Right lobe of liver (tissue), 6 donors: ENCODE measurements at regions of chr1 and their contacts with region 1.

Region 1: DNA sequence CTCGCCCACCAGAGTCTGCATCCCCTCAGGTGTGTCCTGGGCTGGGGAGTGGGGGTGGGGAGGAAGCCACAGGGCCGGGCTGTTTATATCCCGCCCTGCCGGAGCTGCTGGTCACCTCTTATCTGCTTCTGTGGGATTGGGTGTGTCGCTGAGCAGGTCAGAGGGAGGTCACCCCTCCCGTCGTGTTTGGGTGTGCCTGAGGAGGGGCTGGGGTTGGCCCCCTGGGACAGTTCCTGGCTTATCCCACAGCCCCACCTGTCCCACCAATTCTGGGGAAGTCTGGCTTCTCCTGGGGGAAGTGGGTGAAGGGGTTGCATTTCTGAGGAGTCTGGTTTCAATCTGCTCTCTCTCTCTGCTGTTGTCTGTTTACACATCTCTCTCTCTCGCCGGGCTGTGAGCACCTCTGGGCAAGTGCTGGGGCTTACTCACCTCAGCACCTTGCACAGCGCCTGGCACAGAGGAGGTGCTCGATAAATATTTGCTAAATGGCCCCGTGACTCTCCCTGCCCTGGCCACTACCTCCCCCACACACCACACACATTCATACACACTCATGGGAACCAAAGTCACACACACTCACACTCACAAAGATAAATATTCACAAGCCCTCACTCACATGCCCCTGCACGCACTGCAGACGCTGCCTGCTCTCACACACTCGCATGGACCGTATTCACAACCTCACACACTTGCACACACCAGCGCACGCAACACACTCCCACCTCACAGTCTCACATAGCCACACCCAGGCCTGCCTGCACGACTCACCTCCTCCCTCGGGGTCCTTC is 8.3 kb downstream of the ELF3 start:
- DNase-seq: peak; percentile 86 to 94 (median 93)
- ATAC-seq: peak; percentile 55 to 89 (median 81)
- H3K4me3 ChIP-seq: peak overlapping the region in 2 of 3 donors; percentile 34 to 35
- H3K27ac ChIP-seq: peak overlapping the region; percentile 73 to 94 (median 89)
- H3K4me1 ChIP-seq: peaks cover 0 to 58% (median 6%) of the 10 kb centered on the region in 4 donors
- H3K27me3 ChIP-seq: no peaks in the 10 kb centered on the region
- CTCF ChIP-seq: no peak
- POLR2A ChIP-seq: peak; percentile 35

Region 2: DNA sequence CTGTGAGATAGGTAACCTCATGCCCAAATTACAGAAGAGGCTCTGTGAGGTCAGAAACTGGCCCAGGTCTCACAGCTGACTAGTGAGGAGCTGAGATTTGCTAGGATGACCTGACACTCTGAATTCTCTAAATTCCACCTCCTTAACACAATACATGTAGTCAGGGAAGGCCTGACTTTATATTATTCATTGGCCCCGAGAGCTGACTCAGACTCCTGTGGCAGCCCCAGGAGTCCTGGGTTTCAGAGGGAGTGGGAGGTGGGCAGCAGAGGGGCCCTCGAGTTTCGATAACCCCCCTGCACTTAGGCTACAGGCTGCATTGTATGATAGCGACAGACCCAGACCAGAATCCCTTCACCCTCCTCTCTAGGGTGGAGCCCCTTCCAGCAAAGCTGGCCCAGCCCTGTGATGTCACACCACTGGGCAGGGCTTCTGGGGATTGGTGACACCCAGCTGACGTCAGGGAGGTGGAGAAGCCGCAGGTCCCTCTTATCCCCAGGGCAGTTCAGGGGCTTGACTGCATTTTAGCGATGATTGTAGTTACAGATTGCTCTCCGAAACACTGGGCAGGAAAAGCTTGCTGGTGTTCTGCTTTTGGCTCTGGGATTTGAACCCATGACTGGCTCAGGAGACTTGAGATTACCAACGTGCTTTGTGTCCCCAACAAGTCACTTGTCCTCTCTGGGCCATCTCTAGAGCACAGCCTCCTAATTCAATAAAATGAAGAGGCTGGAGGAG is 87.0 kb after region 1 on chr1:
- intact Hi-C with region 1: loop called in 1 of 2 experiments (anchors 5 kb)
- DNase-seq: no peak
- ATAC-seq: no peak
- H3K4me3 ChIP-seq: no peak overlapping the region
- H3K27ac ChIP-seq: no peak overlapping the region
- H3K4me1 ChIP-seq: peaks cover 0 to 29% (median 12%) of the 10 kb centered on the region in 4 donors
- H3K27me3 ChIP-seq: no peaks in the 10 kb centered on the region
- CTCF ChIP-seq: no peak
- POLR2A ChIP-seq: no peak

Region 3: GRCh38 chr1:202765721-202766120 is 747.1 kb after region 1 on chr1:
- intact Hi-C with region 1: no loop called
- DNase-seq: no peak
- ATAC-seq: no peak
- H3K4me3 ChIP-seq: no peak overlapping the region
- H3K27ac ChIP-seq: no peak overlapping the region
- H3K4me1 ChIP-seq: no peaks in the 10 kb centered on the region
- H3K27me3 ChIP-seq: no peaks in the 10 kb centered on the region
- CTCF ChIP-seq: no peak
- POLR2A ChIP-seq: no peak